HEK293 (cell line): ENCODE measurements at regions of chr1 and their contacts with region 1.

Region 1: GRCh38 chr1:156114101-156114916 is at the start of gene LMNA:
- H3K4me3 ChIP-seq: peak within 1 kb of the TSS; percentile 69
- H3K27ac ChIP-seq: peak within 1 kb of the TSS; percentile 66; the same call in 1 of the 2 replicates
- H3K4me1 ChIP-seq: peaks cover 4% of the 10 kb centered on the region
- CTCF ChIP-seq: peak; percentile 1; the same call in 1 of the 2 replicates

Region 2: GRCh38 chr1:155940531-155940992 is 173.7 kb before region 1 on chr1:
- CTCF ChIA-PET with region 1: no interaction called
- POLR2A ChIA-PET with region 1: no interaction called
- H3K4me3 ChIP-seq: no peak overlapping the region
- H3K27ac ChIP-seq: peak overlapping the region; percentile 81
- H3K4me1 ChIP-seq: peaks cover 19% of the 10 kb centered on the region
- CTCF ChIP-seq: no peak

Region 3: DNA sequence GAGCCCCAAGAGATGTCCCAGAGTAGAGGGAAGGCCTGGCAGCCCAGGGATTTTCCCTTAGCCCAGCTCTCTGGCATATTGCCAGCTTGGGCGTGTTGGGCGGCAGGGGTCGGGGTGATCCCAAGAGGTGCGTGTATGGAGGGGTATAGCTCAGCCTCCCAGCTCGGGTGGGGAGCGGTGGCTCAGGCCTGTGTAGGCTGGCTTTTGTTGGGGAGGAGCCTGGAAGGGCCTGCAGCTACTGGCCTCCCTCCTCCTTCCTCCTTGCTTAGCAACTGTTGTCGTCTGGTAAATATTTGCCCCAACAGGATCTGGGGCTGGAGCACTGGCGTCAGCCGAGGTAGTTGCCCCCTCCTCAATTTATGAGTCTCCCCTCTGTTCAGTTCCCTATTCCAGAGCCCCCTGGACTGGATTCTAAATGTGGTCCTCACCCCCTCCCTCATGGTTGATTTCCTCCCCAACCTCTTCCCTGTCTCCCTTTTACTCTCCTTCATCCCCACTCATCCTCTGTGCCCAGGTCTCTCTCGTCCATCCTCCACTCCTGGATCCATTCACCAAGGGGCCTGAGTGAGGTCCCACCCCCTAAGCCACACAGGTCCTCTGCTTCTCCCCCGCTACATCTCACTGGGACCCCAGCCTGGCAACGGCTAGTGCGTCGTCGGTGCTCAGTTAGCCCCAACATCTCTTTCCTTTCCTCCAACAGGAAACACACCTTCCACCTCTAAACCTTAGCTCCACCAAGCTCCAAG is 10.1 kb before region 1 on chr1:
- CTCF ChIA-PET with region 1: interaction called, 1,029 read pairs
- POLR2A ChIA-PET with region 1: interaction called, 63 read pairs
- H3K4me3 ChIP-seq: no peak overlapping the region
- H3K27ac ChIP-seq: no peak overlapping the region; the same call in 1 of the 2 replicates
- H3K4me1 ChIP-seq: peaks cover 12% of the 10 kb centered on the region
- CTCF ChIP-seq: no peak

Region 4: GRCh38 chr1:156129706-156130581 is 15.6 kb after region 1 on chr1:
- CTCF ChIA-PET with region 1: interaction called, 1,029 read pairs
- POLR2A ChIA-PET with region 1: interaction called, 61 read pairs
- H3K4me3 ChIP-seq: no peak overlapping the region
- H3K27ac ChIP-seq: peak overlapping the region; percentile 21
- H3K4me1 ChIP-seq: peaks cover 6% of the 10 kb centered on the region
- CTCF ChIP-seq: peak; percentile 93